BJ (cell line): ENCODE measurements at regions of chr6 and their contacts with region 1.

Region 1: DNA sequence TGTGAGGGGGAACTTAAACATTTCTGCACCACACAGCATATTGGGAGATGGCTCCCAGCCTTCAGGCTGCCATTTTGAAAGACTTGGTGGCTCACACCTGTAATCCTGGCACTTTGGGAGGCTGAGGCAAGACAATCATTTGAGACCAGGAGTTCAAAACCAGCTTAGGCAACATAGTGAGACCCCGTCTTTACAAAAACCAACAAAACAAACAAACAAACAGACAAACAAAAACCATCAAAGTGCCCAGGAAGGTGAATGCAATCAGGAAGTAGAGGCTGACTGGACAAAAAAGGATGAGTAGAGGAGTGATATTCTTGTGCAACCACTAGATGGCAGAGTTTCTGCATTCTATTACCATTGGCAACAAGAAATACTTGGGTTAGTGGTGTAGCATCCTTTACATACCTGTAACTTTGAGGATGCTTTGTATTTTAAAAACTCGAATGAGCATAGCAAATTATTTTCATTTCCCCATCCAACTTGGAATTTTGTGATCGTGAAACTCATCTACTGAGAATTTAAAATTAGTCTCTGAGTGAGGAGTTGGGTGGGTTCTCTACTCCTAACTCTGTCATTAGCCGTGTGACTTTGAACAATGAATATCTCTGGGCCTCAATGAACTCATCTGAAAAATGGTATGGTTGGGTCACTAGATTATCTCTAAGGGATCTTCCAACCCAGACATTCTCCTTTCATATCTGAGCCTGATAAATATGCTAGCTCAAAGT is 84.4 kb downstream of the CRYBG1 start:
- DNase-seq: no peak
- H3K4me3 ChIP-seq: no peak overlapping the region
- H3K27me3 ChIP-seq: peaks cover 10% of the 10 kb centered on the region
- CTCF ChIP-seq: peak; percentile 70

Region 2: DNA sequence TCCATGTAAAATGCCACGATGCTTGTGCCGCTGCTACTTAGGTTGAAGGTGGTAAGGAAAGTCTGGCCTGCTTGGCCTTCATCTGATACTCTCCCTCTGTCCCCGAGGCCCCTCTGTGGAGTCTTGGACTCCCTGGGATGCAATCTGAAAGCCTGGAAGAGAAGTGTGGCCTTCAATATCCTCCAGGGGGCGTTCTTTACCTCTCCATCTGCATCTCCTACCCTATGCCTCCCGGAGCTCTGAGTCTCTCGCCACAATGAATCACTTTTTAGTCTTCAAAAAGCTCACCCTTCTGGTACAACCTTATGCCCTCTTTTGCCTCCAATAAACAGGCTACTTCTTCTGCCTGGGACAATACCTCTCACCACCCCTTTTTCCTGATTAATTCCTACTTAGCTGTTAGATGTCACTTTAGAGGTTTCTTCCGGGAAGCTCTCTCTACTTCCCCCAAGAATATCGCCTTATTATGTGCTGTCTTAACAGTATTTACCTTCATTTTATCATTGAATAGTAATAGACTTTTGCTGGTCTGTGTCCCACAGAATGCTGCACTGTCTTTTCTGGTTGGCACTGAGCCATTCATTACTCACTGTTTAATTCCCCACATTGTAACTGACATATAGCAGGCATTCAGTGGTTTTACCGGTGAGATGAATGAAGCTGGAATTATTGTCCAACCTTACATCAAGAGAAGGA is 105.5 kb before region 1 on chr6:
- CTCF ChIA-PET with region 1: interaction called, 15 read pairs
- POLR2A ChIA-PET with region 1: no interaction called
- DNase-seq: peak; percentile 8
- H3K4me3 ChIP-seq: no peak overlapping the region
- H3K27me3 ChIP-seq: peaks cover 2% of the 10 kb centered on the region
- CTCF ChIP-seq: peak; percentile 87

Region 3: DNA sequence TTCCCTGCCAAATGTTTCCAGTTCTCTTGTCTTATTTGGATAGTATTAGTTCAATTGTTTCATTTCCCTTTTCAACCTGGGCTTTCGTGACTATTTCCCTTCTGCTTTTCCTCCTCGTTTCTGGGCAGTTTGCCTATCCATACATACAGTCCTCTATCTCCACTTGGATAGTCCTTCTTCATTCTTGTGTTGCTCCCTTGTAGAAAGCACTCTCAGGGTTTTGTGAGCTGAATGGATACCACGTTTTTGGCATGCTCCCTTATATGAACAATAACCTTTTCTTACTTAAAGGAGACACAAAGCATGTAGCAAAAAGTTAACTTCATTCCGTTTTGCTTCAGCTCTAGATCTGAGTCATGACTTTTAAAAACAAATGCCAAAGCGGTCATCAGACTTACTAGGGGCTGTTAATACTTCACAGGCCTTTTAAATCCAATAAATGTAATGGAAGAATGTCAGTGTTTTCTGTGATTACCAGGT is 67.8 kb before region 1 on chr6:
- CTCF ChIA-PET with region 1: no interaction called
- POLR2A ChIA-PET with region 1: no interaction called
- DNase-seq: no peak
- H3K4me3 ChIP-seq: no peak overlapping the region
- H3K27me3 ChIP-seq: peaks cover 3% of the 10 kb centered on the region
- CTCF ChIP-seq: no peak

Region 4: GRCh38 chr6:106553440-106553839 is 108.5 kb after region 1 on chr6:
- CTCF ChIA-PET with region 1: interaction called, 13 read pairs
- POLR2A ChIA-PET with region 1: no interaction called
- DNase-seq: no peak
- H3K4me3 ChIP-seq: no peak overlapping the region
- H3K27me3 ChIP-seq: no peaks in the 10 kb centered on the region
- CTCF ChIP-seq: no peak

Region 5: GRCh38 chr6:106574741-106575458 is 130.0 kb after region 1 on chr6:
- CTCF ChIA-PET with region 1: interaction called, 308 read pairs
- POLR2A ChIA-PET with region 1: no interaction called
- DNase-seq: no peak
- H3K4me3 ChIP-seq: no peak overlapping the region
- H3K27me3 ChIP-seq: no peaks in the 10 kb centered on the region; the same call in 1 of the 2 replicates
- CTCF ChIP-seq: no peak